PC-3 (cell line): ENCODE measurements at regions of chr2 and their contacts with region 1.

Region 1: DNA sequence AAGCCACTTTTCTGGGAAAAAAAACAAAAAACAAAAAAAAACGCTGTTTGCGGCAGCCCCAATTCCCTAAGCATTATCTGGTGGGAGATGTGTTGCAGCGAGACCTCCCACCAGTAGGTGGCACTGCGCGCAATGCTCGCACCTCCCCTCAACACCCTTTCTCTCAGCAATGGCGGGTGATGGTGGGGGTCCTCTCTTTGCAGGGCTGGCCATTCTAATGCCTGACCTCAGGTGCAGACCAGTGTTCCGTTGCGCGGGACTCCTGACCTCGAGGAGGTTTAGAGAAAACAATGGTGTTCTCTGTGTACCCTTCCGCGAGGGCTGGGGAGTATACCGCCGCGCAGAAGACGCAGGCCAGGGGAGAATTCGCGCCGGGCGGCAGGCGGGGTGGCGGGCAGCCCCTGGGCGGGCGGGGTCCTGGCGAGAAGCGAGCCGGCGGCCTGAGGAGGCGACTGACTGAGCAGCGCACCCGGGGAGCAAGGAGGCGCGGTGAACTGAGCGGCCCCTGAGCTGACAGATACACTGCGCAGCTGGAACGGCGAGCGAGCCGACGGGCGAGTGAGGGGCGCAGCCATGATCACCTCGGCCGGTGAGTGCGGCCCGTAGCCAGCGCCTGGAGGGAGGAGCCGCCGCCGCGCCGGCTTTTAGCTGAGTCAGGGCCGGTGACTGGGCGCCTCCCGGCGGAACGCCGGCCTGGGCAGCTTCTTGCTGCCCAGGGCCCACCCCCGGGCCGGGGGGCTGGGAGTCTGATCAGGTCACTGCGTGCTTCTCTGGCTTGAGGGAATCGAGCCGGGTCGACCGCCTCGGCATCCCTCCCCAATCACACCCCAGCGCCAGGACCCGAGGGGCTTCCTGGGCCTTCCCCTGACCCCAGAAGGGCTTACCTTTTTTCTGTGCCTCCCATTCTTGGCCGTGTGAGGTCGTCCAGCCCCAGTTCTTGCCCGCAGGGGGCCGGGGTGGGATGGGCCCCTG is at the start of gene PSMD1:
- DNase-seq: peak; percentile 91
- ATAC-seq: peak; percentile 70
- H3K4me3 ChIP-seq: peak within 1 kb of the TSS; percentile 100
- H3K27ac ChIP-seq: peak within 1 kb of the TSS; percentile 80
- H3K4me1 ChIP-seq: peaks cover 26% of the 10 kb centered on the region
- H3K27me3 ChIP-seq: no peaks in the 10 kb centered on the region
- CTCF ChIP-seq: peak; percentile 89
- total RNA-seq, gene PSMD1: 154 and 208 TPM in 2 replicates

Region 2: DNA sequence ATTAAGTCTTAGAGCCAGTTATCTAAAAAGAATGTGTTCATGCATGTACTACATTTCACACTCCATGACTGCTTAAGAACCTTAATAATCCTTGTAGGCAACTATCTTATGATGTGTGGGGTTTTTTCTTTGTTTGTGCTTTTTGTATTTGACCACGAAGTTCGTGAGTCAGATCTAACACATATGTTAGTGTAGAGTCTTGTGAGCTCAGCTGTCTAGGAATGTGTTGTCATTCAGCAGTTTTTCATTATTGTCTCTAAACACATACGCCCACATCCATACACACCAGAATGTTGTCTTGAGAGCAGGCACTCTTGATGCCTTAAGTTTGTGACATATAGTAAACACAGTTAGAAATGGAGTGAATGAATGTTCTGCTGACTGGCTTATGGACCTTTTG is 305.7 kb before region 1 on chr2:
- CTCF ChIA-PET with region 1: no interaction called
- POLR2A ChIA-PET with region 1: interaction called, 10 read pairs
- intact Hi-C with region 1: no loop called
- DNase-seq: peak; percentile 68
- ATAC-seq: peak; percentile 56
- H3K4me3 ChIP-seq: no peak overlapping the region
- H3K27ac ChIP-seq: 0 out of 2 replicates have a peak overlapping the region, but pooled peaks have one; percentile 1
- H3K4me1 ChIP-seq: peaks cover 38% of the 10 kb centered on the region
- H3K27me3 ChIP-seq: no peaks in the 10 kb centered on the region
- CTCF ChIP-seq: no peak

Region 3: GRCh38 chr2:230902180-230902899 is 154.4 kb before region 1 on chr2:
- CTCF ChIA-PET with region 1: no interaction called
- POLR2A ChIA-PET with region 1: no interaction called
- intact Hi-C with region 1: loop called (anchors 5 kb)
- DNase-seq: peak; percentile 72
- ATAC-seq: peak; percentile 85
- H3K4me3 ChIP-seq: no peak overlapping the region
- H3K27ac ChIP-seq: no peak overlapping the region
- H3K4me1 ChIP-seq: peaks cover 4% of the 10 kb centered on the region; the same call in 1 of the 2 replicates
- H3K27me3 ChIP-seq: no peaks in the 10 kb centered on the region
- CTCF ChIP-seq: peak; percentile 86

Region 4: DNA sequence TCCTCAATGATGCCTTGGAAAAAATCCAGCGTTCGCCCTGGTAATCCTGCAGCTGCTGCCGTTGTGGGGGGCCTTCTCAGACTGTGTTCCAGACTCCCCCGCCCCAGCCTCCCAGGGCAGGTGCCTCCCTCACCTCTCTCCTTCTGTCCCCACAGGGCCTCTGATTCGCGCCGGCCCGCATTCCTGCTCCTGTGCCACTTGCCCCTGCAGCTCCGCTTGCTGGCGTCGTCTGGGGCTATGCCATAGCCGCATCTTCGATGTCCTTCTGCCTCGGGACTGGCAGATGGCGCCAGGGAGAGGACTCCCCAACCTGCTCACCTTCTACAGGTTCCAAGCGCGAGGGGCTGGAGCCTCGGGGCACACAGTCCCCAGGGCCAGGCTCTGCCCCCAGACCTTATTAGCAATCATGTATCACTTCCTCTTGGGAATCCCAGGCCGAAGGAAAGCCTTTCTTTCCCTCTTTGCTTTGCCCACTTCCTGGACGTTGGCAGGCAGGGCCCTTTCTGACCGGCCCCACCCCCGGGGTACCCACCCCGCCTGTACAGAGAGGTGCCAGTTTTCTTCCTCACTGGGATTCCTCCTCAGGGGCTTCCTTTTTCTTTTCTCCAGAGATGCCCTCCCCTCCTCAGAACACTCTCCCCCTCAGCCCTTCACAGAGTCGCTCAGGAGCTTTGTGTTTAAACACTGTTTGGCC is 56.4 kb before region 1 on chr2:
- CTCF ChIA-PET with region 1: interaction called, 4 read pairs
- POLR2A ChIA-PET with region 1: no interaction called
- intact Hi-C with region 1: loop called (anchors 1 kb)
- DNase-seq: peak; percentile 23
- ATAC-seq: peak; percentile 65
- H3K4me3 ChIP-seq: no peak overlapping the region
- H3K27ac ChIP-seq: no peak overlapping the region
- H3K4me1 ChIP-seq: no peaks in the 10 kb centered on the region
- H3K27me3 ChIP-seq: peaks cover 7% of the 10 kb centered on the region; the same call in 1 of the 2 replicates
- CTCF ChIP-seq: peak; percentile 35; the same call in 1 of the 2 replicates

Region 5: DNA sequence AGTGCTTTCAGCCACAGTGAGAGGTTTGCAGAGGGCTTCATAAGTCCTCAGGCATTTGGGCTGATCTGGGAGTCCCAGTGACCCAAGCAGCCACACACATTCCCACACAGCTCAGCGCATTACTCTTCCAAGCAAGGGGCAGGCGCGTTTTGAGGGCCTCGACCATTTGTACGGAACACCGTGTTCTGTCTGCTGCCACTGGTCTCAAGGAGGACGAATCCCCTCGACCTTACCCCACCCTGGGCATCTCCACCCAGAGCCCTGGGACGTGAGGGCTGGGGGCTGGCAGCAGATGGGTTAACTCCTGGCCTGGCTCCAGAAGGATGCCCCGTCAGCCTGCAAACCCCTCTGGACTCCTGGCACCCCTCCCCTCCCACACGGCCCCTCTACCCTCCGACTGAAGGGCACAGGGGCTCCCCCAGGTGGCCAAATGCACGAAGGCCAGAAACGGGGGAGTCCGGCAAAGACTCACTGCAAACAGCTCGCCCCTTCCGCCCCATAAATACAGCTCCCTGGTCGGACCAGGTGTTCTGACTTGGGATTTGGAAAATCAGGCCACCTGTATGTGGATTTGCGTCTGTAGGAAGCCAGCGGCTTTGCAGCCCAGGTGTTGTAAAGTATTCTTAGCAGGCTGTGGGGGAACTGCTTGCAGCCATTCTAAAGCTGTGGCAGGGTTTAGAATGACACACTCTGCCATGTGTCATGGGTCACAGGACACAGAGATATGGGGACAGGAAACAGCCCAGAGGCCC is 618.0 kb after region 1 on chr2:
- CTCF ChIA-PET with region 1: no interaction called
- POLR2A ChIA-PET with region 1: no interaction called
- intact Hi-C with region 1: no loop called
- DNase-seq: peak; percentile 67
- ATAC-seq: peak; percentile 79
- H3K4me3 ChIP-seq: peak overlapping the region; percentile 24; the same call in 1 of the 2 replicates
- H3K27ac ChIP-seq: no peak overlapping the region
- H3K4me1 ChIP-seq: peaks cover 6% of the 10 kb centered on the region
- H3K27me3 ChIP-seq: no peaks in the 10 kb centered on the region
- CTCF ChIP-seq: peak; percentile 88